Activated naive CD4-positive, alpha-beta T cell treated with anti-CD3 and anti-CD28 coated beads for 36 hours (primary cell): ENCODE measurements at regions of chr1 and their contacts with region 1.

Region 1: DNA sequence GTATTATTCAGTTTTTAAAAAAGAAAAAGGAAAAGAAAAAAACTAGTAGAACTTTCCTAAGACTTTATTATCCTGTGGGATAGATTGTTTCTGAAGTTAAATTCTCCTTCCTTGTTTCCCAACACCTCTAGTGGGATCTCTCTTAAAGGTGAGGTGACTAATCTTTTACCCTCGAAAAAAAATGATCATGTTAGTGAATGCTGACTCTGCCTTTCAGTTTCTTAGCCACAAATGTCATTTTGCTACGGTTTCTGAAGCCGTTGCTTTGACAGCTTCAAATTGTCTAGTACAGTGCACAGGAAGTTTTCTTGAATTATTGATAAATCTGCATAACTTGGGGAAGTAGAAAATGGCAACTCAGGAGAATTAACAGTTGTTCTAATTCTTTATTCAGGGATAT is 13.0 kb upstream of the NEK7 start:
- DNase-seq: no peak
- H3K4me3 Mint-ChIP-seq: no peak overlapping the region
- H3K27ac Mint-ChIP-seq: no peak overlapping the region
- H3K4me1 Mint-ChIP-seq: peaks cover 4% of the 10 kb centered on the region
- H3K27me3 Mint-ChIP-seq: no peaks in the 10 kb centered on the region

Region 2: GRCh38 chr1:198128533-198128932 is 15.3 kb before region 1 on chr1:
- CTCF ChIA-PET with region 1: no interaction called
- intact Hi-C with region 1: loop called (anchors 2 kb)
- DNase-seq: no peak
- H3K4me3 Mint-ChIP-seq: no peak overlapping the region
- H3K27ac Mint-ChIP-seq: no peak overlapping the region
- H3K4me1 Mint-ChIP-seq: peaks cover 10% of the 10 kb centered on the region
- H3K27me3 Mint-ChIP-seq: no peaks in the 10 kb centered on the region